Activated naive CD8-positive, alpha-beta T cell treated with anti-CD3 and anti-CD28 coated beads, Interleukin-2, amount 10 ng/mL, durations not matched to agents 7 days and 5 days (primary cell): ENCODE measurements at regions of chr7 and their contacts with region 1.

Region 1: DNA sequence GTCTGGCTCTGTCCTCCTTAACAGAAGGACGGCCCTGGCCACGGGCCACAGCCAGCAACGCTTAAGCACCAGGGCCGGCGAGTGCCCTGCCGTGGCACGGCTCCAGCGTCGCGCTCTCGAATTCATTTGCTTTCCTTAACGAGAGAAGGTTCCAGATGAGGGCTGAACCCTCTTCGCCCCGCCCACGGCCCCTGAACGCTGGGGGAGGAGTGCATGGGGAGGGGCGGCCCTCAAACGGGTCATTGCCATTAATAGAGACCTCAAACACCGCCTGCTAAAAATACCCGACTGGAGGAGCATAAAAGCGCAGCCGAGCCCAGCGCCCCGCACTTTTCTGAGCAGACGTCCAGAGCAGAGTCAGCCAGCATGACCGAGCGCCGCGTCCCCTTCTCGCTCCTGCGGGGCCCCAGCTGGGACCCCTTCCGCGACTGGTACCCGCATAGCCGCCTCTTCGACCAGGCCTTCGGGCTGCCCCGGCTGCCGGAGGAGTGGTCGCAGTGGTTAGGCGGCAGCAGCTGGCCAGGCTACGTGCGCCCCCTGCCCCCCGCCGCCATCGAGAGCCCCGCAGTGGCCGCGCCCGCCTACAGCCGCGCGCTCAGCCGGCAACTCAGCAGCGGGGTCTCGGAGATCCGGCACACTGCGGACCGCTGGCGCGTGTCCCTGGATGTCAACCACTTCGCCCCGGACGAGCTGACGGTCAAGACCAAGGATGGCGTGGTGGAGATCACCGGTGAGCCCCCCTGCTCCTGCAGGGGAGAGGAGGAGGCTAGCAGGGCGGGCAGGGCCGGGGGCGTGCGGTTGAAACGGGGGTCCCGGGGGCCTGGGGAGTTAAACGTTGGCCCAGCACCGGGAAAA is at the start of gene HSPB1:
- DNase-seq: peak; percentile 66
- ATAC-seq: peak; percentile 37
- H3K4me3 Mint-ChIP-seq: peak within 1 kb of the TSS; percentile 93
- H3K27ac Mint-ChIP-seq: peak within 1 kb of the TSS; percentile 88
- H3K4me1 Mint-ChIP-seq: peaks cover 14% of the 10 kb centered on the region
- H3K27me3 Mint-ChIP-seq: peaks cover 18% of the 10 kb centered on the region
- total RNA-seq, gene HSPB1: 43.3 to 47.9 TPM

Region 2: DNA sequence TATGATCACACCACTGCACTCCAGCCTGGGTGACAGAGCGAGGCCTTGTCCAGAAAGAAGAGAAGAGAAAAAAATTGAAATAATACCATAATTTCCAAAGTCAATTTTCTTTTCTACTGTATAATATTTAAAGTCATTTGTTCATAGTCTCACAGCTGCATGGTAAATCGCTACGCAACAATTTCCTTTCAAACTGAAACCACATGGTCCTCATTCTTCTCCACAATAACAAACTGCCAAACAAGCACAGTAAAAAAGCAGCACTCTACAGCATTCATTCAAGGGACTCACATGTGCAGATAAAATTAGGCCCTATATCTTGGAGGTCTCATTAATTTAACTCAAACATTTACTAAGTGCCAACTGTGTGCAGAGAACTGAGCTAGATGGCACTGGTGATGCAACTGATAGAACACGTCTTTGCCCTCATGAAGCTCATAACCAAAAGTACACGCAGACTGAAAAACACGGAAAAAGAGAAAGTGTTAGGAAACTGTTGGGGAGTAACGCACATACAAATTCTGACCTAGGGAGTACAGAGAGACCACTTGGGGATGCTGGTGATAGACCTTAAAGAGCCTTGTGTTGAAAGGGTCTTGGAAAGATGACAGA is 169.3 kb before region 1 on chr7:
- POLR2A ChIA-PET with region 1: no interaction called
- DNase-seq: no peak
- ATAC-seq: peak; percentile 25
- H3K4me3 Mint-ChIP-seq: peak overlapping the region; percentile 43
- H3K27ac Mint-ChIP-seq: peak overlapping the region; percentile 83
- H3K4me1 Mint-ChIP-seq: peaks cover 25% of the 10 kb centered on the region
- H3K27me3 Mint-ChIP-seq: peaks cover 18% of the 10 kb centered on the region

Region 3: DNA sequence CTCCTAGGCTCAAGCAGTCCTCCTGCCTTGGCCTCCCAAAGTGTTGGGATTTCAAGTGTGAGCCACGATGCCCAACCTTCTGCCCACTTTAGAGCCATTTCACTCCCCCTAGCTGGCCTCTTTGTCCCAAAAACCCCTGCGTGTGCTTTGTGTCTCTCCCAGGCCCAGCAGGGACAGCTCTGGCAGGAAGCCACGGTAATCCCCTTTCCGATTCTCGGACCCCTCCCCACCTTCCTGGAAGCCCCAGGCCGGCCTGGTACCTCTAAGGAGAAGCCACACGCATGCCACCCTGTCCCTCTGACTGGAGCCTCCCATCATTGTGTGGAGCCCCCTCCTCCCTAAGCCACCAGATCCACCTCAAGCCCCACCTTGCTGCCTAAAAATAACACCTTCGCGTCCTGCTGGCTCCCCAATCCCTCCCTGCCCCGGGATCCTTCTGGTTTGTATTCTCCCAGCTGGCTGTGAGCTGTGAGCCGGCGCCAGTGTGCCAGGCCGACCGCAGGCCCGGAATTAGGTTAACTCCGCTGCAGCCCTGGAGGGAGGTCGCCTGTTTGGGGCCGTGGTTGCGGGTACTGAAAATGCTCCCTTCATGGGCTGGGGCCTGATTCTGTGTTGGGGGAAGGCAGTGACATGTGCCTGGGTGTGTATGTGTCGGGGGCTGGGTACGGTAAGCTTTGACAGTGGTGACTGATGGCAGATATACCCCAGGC is 117.2 kb before region 1 on chr7:
- POLR2A ChIA-PET with region 1: no interaction called
- DNase-seq: no peak
- ATAC-seq: no peak
- H3K4me3 Mint-ChIP-seq: no peak overlapping the region
- H3K27ac Mint-ChIP-seq: no peak overlapping the region
- H3K4me1 Mint-ChIP-seq: no peaks in the 10 kb centered on the region
- H3K27me3 Mint-ChIP-seq: no peaks in the 10 kb centered on the region

Region 4: GRCh38 chr7:76272851-76273497 is 29.6 kb before region 1 on chr7:
- POLR2A ChIA-PET with region 1: no interaction called
- DNase-seq: no peak
- ATAC-seq: peak; percentile 62
- H3K4me3 Mint-ChIP-seq: peak overlapping the region; percentile 63
- H3K27ac Mint-ChIP-seq: peak overlapping the region; percentile 81
- H3K4me1 Mint-ChIP-seq: peaks cover 13% of the 10 kb centered on the region
- H3K27me3 Mint-ChIP-seq: peaks cover 17% of the 10 kb centered on the region

Region 5: DNA sequence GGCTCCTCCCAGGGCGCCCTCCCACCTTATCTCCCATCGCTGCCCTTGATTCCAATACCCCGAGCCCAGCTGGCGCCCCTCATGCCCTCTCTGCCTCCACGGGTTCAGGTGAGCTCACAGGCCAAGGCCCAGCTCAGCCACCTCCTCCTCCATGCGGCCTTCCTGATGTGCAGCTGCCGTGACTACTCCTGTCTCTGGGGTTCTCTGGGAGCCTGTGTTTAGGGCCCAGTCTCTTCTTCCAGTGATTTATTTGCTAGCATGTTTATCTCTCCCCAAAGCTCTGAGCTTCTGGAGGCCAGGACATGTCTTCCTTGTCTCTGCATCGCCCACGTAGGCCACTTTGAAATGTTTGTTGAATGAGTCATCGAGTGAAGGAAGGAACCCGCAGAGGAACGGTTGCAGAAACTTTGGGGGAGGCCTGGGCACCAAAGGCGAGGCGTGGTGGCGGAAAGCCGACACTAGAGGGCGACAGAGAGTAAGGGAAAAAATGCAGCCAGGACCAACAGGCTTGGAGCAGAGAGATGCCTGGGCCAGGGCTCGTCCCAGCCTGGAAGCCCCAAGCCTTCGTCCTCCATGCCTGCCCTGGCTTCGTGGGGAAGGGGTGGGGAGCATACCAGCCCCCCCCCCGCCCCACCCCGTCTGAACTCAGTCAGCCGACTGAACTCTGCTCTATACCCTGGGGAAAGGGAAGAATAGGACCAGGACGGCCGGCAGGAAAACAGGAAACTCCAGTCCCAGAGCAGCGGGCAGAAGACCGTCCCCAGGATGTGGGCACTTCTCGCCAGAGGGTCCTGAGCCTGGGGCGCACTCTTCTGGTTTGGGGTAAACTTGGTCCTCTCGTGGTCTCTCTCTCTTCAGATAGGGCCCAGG is 11.0 kb before region 1 on chr7:
- POLR2A ChIA-PET with region 1: interaction called, 11 read pairs
- DNase-seq: peak; percentile 89
- ATAC-seq: peak; percentile 90
- H3K4me3 Mint-ChIP-seq: peak overlapping the region; percentile 35
- H3K27ac Mint-ChIP-seq: peak overlapping the region; percentile 86
- H3K4me1 Mint-ChIP-seq: peaks cover 8% of the 10 kb centered on the region
- H3K27me3 Mint-ChIP-seq: peaks cover 8% of the 10 kb centered on the region